ENCODE measurements at regions of chr12 and their contacts with region 1.

Region 1: GRCh38 chr12:62123721-62124203 is 136.4 kb upstream of the USP15 start:
- DNase-seq: peak; percentile 61
- H3K4me3 Mint-ChIP-seq: no peak overlapping the region
- H3K27ac Mint-ChIP-seq: no peak overlapping the region
- H3K4me1 Mint-ChIP-seq: peaks cover 2% of the 10 kb centered on the region
- H3K27me3 Mint-ChIP-seq: peaks cover 6% of the 10 kb centered on the region

Region 2: DNA sequence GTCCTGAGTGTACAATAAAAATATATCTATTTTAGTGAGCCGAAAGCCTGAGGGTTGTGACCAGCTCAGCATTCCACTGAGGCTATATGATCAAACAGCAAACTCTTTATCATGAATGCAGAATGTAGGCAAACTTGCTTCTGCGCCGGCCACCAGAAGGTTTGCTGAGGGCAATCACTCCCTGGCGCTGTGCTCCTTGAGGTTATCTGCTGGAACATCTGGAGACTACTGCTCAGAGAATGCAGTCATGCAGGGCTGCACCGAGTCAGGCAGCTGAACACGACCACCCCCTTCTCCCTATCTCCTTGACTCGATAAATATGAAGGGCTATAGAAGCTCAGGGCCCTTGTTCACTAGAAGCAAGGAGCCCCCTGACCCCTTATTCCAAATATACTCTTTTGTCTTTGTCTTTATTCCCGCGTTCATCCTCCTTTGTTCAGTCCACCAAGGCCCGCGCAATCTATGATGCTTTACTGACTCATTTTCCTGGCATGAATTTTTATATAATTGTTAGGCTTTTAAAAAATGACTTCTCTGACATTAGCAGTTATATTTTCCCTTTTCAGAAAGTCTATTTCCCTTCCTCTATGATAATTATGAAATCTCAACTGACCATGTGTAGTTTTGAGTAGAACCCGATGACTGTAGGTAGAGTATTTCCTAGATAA is 1438.6 kb before region 1 on chr12:
- CTCF ChIA-PET with region 1: no interaction called
- intact Hi-C with region 1: loop called (anchors 10 kb)
- DNase-seq: no peak
- H3K4me3 Mint-ChIP-seq: no peak overlapping the region
- H3K27ac Mint-ChIP-seq: no peak overlapping the region
- H3K4me1 Mint-ChIP-seq: no peaks in the 10 kb centered on the region
- H3K27me3 Mint-ChIP-seq: no peaks in the 10 kb centered on the region

Region 3: GRCh38 chr12:61870658-61871484 is 252.9 kb before region 1 on chr12:
- CTCF ChIA-PET with region 1: no interaction called
- intact Hi-C with region 1: no loop called
- DNase-seq: peak; percentile 30
- H3K4me3 Mint-ChIP-seq: no peak overlapping the region
- H3K27ac Mint-ChIP-seq: no peak overlapping the region
- H3K4me1 Mint-ChIP-seq: no peaks in the 10 kb centered on the region
- H3K27me3 Mint-ChIP-seq: no peaks in the 10 kb centered on the region

Region 4: GRCh38 chr12:62006076-62006732 is 117.6 kb before region 1 on chr12:
- CTCF ChIA-PET with region 1: no interaction called
- intact Hi-C with region 1: loop called (anchors 2 kb)
- DNase-seq: peak; percentile 43
- H3K4me3 Mint-ChIP-seq: no peak overlapping the region
- H3K27ac Mint-ChIP-seq: no peak overlapping the region
- H3K4me1 Mint-ChIP-seq: no peaks in the 10 kb centered on the region
- H3K27me3 Mint-ChIP-seq: peaks cover 3% of the 10 kb centered on the region

Region 5: DNA sequence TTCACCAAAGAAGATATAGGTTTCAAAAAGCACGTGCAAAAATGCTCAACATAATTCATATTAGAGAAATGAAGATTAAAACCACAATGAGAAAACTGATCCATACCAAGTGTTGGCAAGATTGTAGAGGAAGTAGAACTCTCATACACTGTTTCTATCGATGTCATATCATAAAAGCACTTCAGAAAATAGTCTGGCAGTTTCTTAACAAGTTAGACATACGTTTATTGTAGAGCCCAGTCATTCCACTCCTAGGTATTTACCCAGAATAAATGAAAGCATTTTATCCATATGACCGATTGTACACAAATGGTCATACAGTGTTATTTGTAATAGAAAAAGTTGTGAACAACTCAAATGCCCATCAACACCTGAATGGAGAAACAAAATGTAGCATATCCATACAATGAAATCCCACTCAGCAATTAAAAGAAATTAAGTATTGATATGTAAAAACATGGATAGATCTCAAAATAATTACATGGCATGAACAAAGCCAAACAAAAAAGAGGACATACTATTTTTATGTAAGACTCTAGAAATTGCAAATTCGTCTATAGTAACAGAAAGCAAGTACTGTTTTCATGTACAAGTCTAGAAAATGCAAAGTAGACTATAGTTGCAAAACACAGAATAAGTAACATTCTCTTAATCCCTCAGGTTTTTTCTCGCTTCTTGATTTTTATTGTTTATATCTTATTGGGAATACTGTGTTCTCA is 177.5 kb after region 1 on chr12:
- CTCF ChIA-PET with region 1: no interaction called
- intact Hi-C with region 1: no loop called
- DNase-seq: no peak
- H3K4me3 Mint-ChIP-seq: no peak overlapping the region
- H3K27ac Mint-ChIP-seq: no peak overlapping the region
- H3K4me1 Mint-ChIP-seq: peaks cover 55% of the 10 kb centered on the region
- H3K27me3 Mint-ChIP-seq: no peaks in the 10 kb centered on the region

Measured in activated naive CD4-positive, alpha-beta T cell treated with anti-CD3 and anti-CD28 coated beads for 36 hours (primary cell).